ENCODE measurements at regions of chr19 and their contacts with region 1.

Region 1: GRCh38 chr19:47483800-47484690 is at the start of gene KPTN:
- DNase-seq: peak; percentile 93
- ATAC-seq: peak; percentile 84
- H3K4me3 Mint-ChIP-seq: peak within 1 kb of the TSS; percentile 85
- H3K27ac Mint-ChIP-seq: peak within 1 kb of the TSS; percentile 99
- H3K4me1 Mint-ChIP-seq: peaks cover 36% of the 10 kb centered on the region
- H3K27me3 Mint-ChIP-seq: no peaks in the 10 kb centered on the region
- CTCF ChIP-seq: peak; percentile 96
- total RNA-seq, gene KPTN: 10.4 to 11.0 TPM

Region 2: DNA sequence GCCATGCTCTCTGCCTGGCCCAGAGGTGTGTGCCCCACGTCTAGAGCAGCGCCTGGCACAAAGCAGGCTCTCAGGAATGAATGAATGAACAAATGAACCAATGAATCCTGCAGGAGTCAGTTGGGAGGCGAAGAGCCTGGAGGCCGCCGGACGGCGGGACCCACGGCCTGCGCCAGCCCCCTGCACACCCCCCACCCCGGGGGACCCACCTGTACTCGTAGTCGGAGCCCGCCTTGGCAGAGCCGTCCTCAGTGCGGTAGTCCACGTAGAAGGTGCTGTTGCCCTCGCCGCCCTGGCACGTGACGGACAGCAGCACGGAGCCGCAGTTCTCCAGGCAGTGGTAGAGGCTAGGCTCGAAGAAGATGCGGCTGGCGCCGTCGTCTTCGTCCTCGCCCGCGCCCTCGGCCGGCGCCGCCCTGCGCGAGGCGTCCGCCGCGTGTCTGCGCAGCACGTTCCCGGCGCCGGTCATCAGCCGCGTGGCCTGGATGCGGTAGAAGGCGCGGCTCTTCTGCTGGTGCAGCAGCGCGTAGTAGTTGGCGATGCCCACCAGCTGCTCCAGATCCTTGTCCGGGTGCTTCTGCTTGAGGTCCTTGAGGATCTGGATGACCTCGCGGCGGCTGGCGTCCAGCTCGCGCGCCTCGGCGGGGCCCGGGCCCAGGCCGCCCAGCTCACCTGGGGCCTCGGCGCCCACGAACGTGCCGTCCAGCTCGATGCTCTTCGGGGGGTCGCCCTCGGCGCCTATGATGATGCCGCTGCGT is 27.1 kb before region 1 on chr19:
- CTCF ChIA-PET with region 1: no interaction called
- POLR2A ChIA-PET with region 1: no interaction called
- intact Hi-C with region 1: no loop called
- DNase-seq: no peak
- ATAC-seq: no peak
- H3K4me3 Mint-ChIP-seq: no peak overlapping the region
- H3K27ac Mint-ChIP-seq: no peak overlapping the region
- H3K4me1 Mint-ChIP-seq: no peaks in the 10 kb centered on the region
- H3K27me3 Mint-ChIP-seq: peaks cover 29% of the 10 kb centered on the region
- CTCF ChIP-seq: no peak

Region 3: GRCh38 chr19:47494729-47495128 is 10.7 kb after region 1 on chr19:
- CTCF ChIA-PET with region 1: interaction called, 29 read pairs
- POLR2A ChIA-PET with region 1: interaction called, 24 read pairs
- intact Hi-C with region 1: no loop called
- DNase-seq: no peak
- ATAC-seq: no peak
- H3K4me3 Mint-ChIP-seq: no peak overlapping the region
- H3K27ac Mint-ChIP-seq: no peak overlapping the region
- H3K4me1 Mint-ChIP-seq: peaks cover 3% of the 10 kb centered on the region
- H3K27me3 Mint-ChIP-seq: no peaks in the 10 kb centered on the region
- CTCF ChIP-seq: no peak

Region 4: GRCh38 chr19:47514869-47515588 is 31.0 kb after region 1 on chr19 and contains the start of gene NAPA:
- CTCF ChIA-PET with region 1: interaction called, 37 read pairs
- POLR2A ChIA-PET with region 1: interaction called, 18 read pairs
- intact Hi-C with region 1: no loop called
- DNase-seq: peak; percentile 100
- ATAC-seq: peak; percentile 98
- H3K4me3 Mint-ChIP-seq: peak within 1 kb of the TSS; percentile 98
- H3K27ac Mint-ChIP-seq: peak within 1 kb of the TSS; percentile 98
- H3K4me1 Mint-ChIP-seq: peaks cover 75% of the 10 kb centered on the region
- H3K27me3 Mint-ChIP-seq: no peaks in the 10 kb centered on the region
- CTCF ChIP-seq: no peak
- total RNA-seq, gene NAPA: 43.9 to 47.2 TPM